ENCODE measurements at regions of chr5 and their contacts with region 1.

Region 1: GRCh38 chr5:83564069-83564749 is 92.7 kb downstream of the VCAN start:
- DNase-seq: no peak
- H3K4me3 Mint-ChIP-seq: no peak overlapping the region
- H3K27ac Mint-ChIP-seq: no peak overlapping the region
- H3K4me1 Mint-ChIP-seq: no peaks in the 10 kb centered on the region
- H3K27me3 Mint-ChIP-seq: peaks cover 25% of the 10 kb centered on the region

Region 2: DNA sequence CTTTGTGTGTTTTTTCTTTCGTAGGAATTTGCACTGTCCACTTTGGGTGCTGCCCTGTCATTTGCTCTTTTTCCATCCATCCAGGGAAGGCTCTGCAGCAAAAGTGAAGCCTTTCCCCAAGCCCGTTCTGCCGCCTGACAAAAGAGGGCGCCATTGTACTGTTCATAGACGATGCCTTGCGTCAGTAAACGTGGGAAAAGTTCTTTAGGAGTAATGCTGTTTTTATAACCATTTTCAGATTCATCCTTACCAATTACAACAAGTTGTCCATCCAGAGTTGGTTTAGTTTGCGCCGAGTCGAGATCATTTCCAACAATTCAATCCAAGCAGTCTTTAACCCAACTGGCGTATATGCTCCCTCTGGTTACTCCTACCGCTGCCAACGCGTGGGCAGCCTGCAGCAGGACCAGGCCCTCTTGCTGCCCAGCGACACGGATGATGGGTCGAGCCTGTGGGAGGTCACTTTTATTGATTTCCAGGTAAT is 1251.8 kb before region 1 on chr5:
- CTCF ChIA-PET with region 1: interaction called, 5 read pairs
- intact Hi-C with region 1: loop called (anchors 2 kb)
- DNase-seq: peak; percentile 67
- H3K4me3 Mint-ChIP-seq: no peak overlapping the region
- H3K27ac Mint-ChIP-seq: no peak overlapping the region
- H3K4me1 Mint-ChIP-seq: no peaks in the 10 kb centered on the region
- H3K27me3 Mint-ChIP-seq: peaks cover 4% of the 10 kb centered on the region

Region 3: DNA sequence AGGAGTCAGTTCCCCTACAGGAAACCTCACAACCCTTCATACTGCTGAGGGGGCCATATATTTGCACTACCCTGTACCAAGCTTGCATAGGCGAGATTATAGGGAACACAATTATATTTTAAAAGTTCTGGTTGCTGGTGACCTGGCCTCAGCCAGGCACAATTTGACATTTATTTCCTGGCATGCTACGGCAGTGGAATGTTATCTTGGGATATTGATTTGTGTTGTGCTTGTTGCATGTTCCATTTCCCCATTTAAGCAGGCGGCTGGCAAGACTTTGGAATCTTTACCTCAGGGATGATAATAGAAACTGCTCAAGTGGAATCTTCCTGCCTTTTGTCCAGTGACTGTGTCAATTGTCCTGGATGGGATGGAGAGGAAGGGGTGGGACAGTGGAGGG is 1219.1 kb before region 1 on chr5:
- CTCF ChIA-PET with region 1: no interaction called
- intact Hi-C with region 1: no loop called
- DNase-seq: no peak
- H3K4me3 Mint-ChIP-seq: no peak overlapping the region
- H3K27ac Mint-ChIP-seq: no peak overlapping the region
- H3K4me1 Mint-ChIP-seq: peaks cover 6% of the 10 kb centered on the region
- H3K27me3 Mint-ChIP-seq: peaks cover 9% of the 10 kb centered on the region

Region 4: DNA sequence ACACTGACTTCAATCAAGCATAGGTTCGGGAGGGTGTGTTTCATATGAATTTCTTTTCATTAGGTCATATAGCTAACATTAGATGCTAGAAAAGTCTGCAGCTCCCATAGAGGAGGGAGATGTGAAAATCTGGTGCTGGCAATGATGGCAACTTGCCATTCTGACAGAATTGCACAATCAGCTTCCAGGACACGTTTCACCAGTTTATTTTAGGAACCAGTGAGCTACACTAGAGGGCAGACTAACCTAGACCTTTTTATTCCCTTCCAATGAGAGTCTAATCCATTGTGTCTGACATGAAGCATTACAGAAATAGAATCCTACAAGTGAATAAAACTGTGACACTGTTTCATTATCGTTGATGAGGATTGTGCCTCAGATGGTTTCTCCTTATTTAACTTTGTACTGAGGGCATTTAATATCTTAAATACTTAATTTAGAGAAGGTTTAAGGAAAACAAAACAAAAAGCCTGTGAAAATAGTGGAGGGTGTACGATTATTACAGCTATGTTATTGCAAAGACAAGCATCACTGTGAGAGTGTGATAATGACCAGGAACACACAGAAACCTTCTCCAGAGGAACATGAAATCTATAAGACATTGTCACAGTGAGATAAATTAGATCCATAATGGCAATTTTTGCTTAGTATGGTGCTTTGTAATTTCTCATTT is 922.7 kb before region 1 on chr5:
- CTCF ChIA-PET with region 1: no interaction called
- intact Hi-C with region 1: loop called (anchors 1 kb)
- DNase-seq: peak; percentile 34
- H3K4me3 Mint-ChIP-seq: no peak overlapping the region
- H3K27ac Mint-ChIP-seq: no peak overlapping the region
- H3K4me1 Mint-ChIP-seq: no peaks in the 10 kb centered on the region
- H3K27me3 Mint-ChIP-seq: no peaks in the 10 kb centered on the region

Region 5: DNA sequence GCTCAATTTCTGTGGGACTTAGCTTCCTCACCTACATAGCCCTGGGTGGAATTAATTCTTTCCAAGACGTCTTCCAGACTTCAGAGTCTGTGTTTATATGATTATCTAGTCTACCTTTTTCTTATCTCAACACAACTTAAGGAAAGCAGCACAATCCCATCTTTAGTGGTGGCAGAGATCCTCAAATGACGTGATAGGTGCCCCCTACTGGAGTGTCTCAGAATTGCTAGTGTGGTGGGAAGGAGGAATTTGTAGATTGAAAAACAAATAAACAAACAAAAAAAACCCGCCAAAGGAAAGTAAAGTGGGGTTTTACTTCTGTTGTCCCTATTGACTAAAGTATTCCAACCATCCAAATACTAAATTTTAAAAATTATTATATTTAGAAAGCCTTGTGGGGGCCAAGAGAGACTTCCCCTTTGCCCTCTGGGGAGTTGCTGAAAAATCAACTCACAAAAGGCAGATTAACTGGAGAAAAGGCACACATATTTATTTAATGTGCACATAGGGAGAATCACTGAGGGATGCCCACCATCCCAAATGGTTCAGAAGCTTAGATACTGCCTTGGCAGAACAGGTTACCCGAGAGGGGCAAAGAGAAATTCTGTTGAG is 770.3 kb before region 1 on chr5:
- CTCF ChIA-PET with region 1: no interaction called
- intact Hi-C with region 1: loop called (anchors 10 kb)
- DNase-seq: peak; percentile 57
- H3K4me3 Mint-ChIP-seq: no peak overlapping the region
- H3K27ac Mint-ChIP-seq: no peak overlapping the region
- H3K4me1 Mint-ChIP-seq: no peaks in the 10 kb centered on the region
- H3K27me3 Mint-ChIP-seq: no peaks in the 10 kb centered on the region

Region 6: DNA sequence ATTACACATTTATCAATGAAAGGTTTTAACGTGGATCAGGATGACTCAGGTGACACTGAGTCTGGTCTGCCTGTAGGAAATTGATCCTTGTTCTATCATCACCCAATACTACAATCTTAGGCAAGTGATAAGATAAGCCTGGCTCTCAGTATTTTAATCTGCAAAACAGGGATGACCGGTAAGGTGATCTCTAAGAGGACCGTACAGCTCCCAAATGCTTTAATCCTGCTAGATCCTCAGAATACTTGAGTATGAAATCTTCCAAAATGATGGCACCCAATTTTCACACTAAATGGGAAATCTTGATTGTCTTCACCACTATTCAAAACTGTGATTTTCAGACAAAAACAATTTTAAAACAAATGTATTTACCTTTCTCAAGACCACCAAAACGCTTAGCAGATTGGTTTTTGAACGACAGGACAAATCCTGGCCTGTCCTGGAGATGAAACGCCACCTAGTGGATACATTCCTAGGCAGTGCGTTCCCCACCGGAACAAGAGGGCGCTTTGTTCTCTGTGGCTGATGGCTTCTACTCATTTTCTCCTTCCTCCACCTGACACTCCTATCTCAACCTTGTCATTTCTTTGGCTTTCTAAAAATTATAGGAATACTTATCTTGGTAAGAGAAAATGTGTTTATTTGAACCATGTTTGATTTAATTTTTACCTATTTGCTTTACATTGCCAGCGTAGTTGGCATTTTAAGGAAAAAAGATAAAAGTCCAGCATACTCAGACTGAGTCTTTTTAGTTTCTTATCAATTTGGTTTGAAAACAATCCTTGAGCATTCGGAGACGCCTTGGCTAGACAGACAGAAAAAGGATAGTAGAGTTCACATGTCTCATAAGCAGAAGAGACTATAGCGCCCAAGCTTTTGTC is 133.8 kb before region 1 on chr5:
- CTCF ChIA-PET with region 1: interaction called, 3 read pairs
- intact Hi-C with region 1: loop called (anchors 1 kb)
- DNase-seq: peak; percentile 76
- H3K4me3 Mint-ChIP-seq: no peak overlapping the region
- H3K27ac Mint-ChIP-seq: no peak overlapping the region
- H3K4me1 Mint-ChIP-seq: no peaks in the 10 kb centered on the region
- H3K27me3 Mint-ChIP-seq: no peaks in the 10 kb centered on the region

Region 7: GRCh38 chr5:83473346-83474163 is 90.7 kb before region 1 on chr5:
- CTCF ChIA-PET with region 1: no interaction called
- intact Hi-C with region 1: loop called (anchors 5 kb)
- DNase-seq: peak; percentile 76
- H3K4me3 Mint-ChIP-seq: peak overlapping the region; percentile 76
- H3K27ac Mint-ChIP-seq: no peak overlapping the region
- H3K4me1 Mint-ChIP-seq: peaks cover 36% of the 10 kb centered on the region
- H3K27me3 Mint-ChIP-seq: peaks cover 79% of the 10 kb centered on the region

Measured in activated naive CD4-positive, alpha-beta T cell treated with anti-CD3 and anti-CD28 coated beads for 36 hours (primary cell).